ENCODE measurements at regions of chr11 and their contacts with region 1.

Region 1: DNA sequence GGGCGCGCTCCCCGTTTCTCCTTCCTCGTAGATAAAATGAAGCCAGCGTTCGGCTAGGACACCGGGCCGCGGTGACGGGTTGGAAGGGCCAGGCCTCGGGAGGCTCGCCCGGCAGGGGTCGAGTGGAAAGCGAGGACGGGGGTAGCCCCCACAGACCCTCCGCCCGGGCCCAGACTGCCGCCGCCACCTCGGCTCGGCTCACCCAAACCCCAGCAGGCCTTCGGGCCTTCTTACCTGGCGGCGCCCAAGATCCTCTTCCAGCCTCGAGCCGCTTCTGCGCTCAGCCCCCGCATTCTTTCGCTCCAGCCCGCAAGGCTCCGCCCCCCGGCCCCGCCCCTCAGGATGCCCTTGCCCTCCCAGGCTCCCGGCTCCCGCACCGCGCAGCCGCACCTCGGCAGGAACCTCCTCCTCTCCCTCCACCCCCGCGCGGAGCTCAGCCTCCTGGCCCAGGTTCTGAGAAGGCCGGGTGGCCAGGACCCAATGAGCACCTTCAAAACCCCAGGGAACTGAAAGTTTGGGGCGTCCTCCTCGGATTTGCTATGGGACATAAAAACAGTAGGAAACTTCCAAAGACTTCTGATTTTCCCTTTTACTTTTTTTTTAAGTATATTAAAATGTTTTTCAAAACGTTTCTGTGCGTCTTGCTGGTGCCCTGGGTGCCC is at the start of gene CD59:
- DNase-seq: peak; percentile 41
- H3K4me3 ChIP-seq: peak within 1 kb of the TSS; percentile 79
- CTCF ChIP-seq: no peak

Region 2: GRCh38 chr11:33557201-33557600 is 179.1 kb before region 1 on chr11:
- CTCF ChIA-PET with region 1: no interaction called
- POLR2A ChIA-PET with region 1: no interaction called
- DNase-seq: peak; percentile 71
- H3K4me3 ChIP-seq: no peak overlapping the region
- CTCF ChIP-seq: no peak

Region 3: DNA sequence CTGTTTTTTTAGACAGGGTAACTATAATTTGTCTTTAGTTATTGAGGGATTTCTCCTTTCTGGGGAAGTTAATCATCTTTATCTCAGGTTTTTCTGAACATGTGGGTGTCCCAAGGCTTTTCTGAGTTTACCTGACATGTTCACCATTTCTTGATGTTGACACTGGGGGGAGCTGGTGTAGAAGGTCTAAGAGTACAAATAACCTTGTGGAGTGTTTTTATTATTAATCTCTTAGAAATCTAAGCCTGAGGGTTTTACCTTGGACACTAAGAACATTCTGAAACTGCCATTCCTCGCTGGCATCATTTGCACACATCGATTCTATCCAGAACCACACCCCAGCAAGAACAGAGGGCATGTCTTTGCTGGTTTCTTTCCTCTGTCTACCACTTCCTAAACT is 20.0 kb before region 1 on chr11:
- CTCF ChIA-PET with region 1: interaction called, 15 read pairs
- POLR2A ChIA-PET with region 1: interaction called, 3 read pairs
- DNase-seq: no peak
- H3K4me3 ChIP-seq: no peak overlapping the region
- CTCF ChIP-seq: peak; percentile 21

Region 4: DNA sequence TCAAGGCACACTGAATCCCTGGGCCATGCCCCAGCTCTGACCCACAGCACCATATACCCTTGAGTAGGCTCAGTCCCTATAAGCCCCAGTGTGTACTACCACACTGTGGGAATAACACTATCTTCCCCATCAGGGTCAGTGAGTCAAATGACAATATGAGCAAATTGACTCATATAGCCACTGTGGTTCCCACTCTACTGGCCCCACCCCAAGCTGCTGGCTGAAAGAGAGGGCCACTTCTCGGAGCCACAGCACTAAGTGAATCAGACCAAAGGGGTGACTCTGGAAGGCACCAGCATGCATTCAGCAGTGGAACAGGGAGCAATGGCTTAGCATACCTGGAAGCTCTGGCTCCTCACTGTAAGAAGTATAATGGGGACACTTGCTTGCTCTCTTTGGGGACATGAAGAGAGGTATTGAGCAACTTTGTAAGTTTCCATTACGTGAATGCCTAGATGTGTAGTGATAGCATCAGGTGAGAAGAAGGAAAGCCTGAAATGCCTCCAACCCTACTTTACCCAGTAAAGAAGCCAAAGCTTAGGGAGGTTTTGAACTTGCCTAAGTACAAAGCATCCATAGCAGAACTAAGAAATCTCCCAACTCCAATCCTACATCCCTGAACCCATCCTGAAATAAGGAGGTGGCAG is 13.6 kb before region 1 on chr11:
- CTCF ChIA-PET with region 1: interaction called, 11 read pairs
- POLR2A ChIA-PET with region 1: interaction called, 5 read pairs
- DNase-seq: no peak
- H3K4me3 ChIP-seq: no peak overlapping the region
- CTCF ChIP-seq: no peak

Region 5: DNA sequence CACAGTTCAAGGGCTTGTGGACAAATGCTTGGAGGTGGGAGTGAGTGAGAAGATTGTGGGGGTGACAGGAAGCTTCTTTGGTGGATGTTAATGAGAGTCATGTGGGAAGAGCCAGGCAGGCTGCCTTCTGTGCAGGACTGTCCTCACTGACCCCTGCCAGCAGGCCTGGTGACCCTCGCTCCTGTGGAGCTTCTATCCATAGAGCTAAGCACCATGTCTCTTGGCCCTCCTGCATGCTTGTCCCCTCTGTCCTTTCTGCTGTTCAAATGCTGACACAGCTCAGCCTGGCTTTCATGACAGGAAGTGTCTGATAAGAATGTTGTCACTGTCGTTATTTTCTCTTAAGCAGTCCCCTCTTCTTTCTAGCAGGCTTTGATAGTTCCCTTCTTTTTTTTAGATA is 406.8 kb after region 1 on chr11:
- CTCF ChIA-PET with region 1: no interaction called
- POLR2A ChIA-PET with region 1: no interaction called
- DNase-seq: no peak
- H3K4me3 ChIP-seq: no peak overlapping the region
- CTCF ChIP-seq: no peak

Measured in AG04449 (cell line).